ENCODE measurements at regions of chr4 and their contacts with region 1.

Region 1: DNA sequence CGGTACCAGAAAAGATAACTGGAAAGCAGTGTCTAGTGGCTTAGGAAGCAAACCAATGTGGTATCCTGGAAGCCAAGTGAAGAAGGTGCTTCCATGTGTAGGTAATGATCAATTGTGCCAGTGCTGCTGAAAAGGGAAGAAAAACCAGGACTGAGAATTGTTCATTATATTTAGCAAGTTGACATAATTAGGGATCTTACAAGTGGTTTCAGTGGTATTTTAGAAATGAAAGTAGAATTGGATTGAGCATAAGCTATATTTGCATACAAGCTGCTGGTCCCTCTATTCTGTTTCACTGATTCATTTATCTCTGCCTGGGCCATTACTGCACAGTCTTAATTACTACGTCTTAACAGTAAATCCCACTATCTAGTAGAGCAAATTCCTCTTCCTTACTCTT is 32.3 kb downstream of the PRDM8 start:
- DNase-seq: peak; percentile 60
- ATAC-seq: peak; percentile 94
- H3K4me3 ChIP-seq: no peak overlapping the region
- H3K27ac ChIP-seq: peak overlapping the region; percentile 49
- H3K4me1 ChIP-seq: peaks cover 23% of the 10 kb centered on the region
- H3K27me3 ChIP-seq: no peaks in the 10 kb centered on the region
- CTCF ChIP-seq: no peak
- EP300 ChIP-seq: peak; percentile 86 to 89
- POLR2A ChIP-seq: no peak
- RAD21 ChIP-seq: no peak

Region 2: DNA sequence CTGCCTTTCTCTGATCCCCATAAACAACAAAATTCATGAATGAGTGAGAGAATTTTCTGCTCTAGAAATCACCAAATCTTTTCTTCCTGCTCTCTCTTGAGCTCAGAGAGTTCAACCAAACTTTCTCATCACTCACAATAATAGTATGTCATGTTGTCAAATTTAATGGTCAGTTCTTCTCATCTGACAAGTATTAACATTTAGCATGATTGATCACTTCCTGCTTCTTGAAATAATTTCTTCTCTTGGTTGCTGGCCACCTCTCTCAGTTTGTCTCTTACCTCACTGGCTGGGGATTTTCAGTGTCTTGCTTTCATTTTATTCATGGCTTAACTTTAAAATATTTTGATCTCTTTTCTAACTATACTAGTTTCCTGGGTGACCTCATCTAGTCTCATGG is 11.4 kb after region 1 on chr4:
- CTCF ChIA-PET with region 1: interaction called, 6 read pairs
- POLR2A ChIA-PET with region 1: interaction called, 6 read pairs
- RAD21 ChIA-PET with region 1: interaction called, 28 read pairs
- SMC1A ChIA-PET with region 1: interaction called, 51 read pairs
- in situ Hi-C with region 1: no loop called
- intact Hi-C with region 1: no loop called
- DNase-seq: peak; percentile 45
- ATAC-seq: peak; percentile 95
- H3K4me3 ChIP-seq: no peak overlapping the region
- H3K27ac ChIP-seq: no peak overlapping the region
- H3K4me1 ChIP-seq: no peaks in the 10 kb centered on the region
- H3K27me3 ChIP-seq: no peaks in the 10 kb centered on the region
- CTCF ChIP-seq: no peak
- EP300 ChIP-seq: peak in 1 of 2 experiments; percentile 61; a peak in 1 of 4 replicates
- POLR2A ChIP-seq: no peak
- RAD21 ChIP-seq: no peak

Region 3: DNA sequence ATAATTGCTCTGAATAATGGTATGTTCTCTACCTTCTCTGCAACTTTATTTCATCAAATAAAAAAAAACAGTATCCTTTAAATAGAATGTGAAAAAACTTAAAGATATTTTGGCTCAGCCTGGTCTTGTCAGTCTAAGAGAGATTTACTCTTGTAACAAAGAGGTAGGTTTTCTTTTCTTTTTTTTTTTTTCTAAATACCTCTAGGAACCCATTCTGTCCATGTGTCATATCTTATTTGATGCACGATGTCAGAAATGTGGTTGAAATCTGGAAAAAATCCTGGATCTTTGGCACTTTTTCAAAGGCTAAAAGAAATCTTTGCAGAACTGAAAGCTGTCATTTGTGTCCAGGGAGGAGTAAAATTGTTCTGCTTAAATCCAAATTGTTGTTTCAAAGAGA is 19.6 kb after region 1 on chr4:
- CTCF ChIA-PET with region 1: interaction called, 4 read pairs
- POLR2A ChIA-PET with region 1: interaction called, 9 read pairs
- RAD21 ChIA-PET with region 1: interaction called, 3 read pairs
- SMC1A ChIA-PET with region 1: interaction called, 17 read pairs
- in situ Hi-C with region 1: no loop called
- intact Hi-C with region 1: loop called (anchors 2 kb)
- DNase-seq: no peak
- ATAC-seq: no peak
- H3K4me3 ChIP-seq: no peak overlapping the region
- H3K27ac ChIP-seq: no peak overlapping the region
- H3K4me1 ChIP-seq: peaks cover 4% of the 10 kb centered on the region; the same call in 1 of the 2 replicates
- H3K27me3 ChIP-seq: no peaks in the 10 kb centered on the region
- CTCF ChIP-seq: no peak
- EP300 ChIP-seq: no peak
- POLR2A ChIP-seq: no peak
- RAD21 ChIP-seq: no peak

Region 4: GRCh38 chr4:80255329-80256095 is 25.9 kb after region 1 on chr4:
- CTCF ChIA-PET with region 1: interaction called, 4 read pairs
- POLR2A ChIA-PET with region 1: interaction called, 9 read pairs
- RAD21 ChIA-PET with region 1: no interaction called
- SMC1A ChIA-PET with region 1: interaction called, 10 read pairs
- in situ Hi-C with region 1: no loop called
- intact Hi-C with region 1: loop called (anchors 2 kb)
- DNase-seq: no peak
- ATAC-seq: no peak
- H3K4me3 ChIP-seq: no peak overlapping the region
- H3K27ac ChIP-seq: no peak overlapping the region
- H3K4me1 ChIP-seq: peaks cover 4% of the 10 kb centered on the region; the same call in 1 of the 2 replicates
- H3K27me3 ChIP-seq: no peaks in the 10 kb centered on the region
- CTCF ChIP-seq: no peak
- EP300 ChIP-seq: no peak
- POLR2A ChIP-seq: no peak
- RAD21 ChIP-seq: no peak

Region 5: DNA sequence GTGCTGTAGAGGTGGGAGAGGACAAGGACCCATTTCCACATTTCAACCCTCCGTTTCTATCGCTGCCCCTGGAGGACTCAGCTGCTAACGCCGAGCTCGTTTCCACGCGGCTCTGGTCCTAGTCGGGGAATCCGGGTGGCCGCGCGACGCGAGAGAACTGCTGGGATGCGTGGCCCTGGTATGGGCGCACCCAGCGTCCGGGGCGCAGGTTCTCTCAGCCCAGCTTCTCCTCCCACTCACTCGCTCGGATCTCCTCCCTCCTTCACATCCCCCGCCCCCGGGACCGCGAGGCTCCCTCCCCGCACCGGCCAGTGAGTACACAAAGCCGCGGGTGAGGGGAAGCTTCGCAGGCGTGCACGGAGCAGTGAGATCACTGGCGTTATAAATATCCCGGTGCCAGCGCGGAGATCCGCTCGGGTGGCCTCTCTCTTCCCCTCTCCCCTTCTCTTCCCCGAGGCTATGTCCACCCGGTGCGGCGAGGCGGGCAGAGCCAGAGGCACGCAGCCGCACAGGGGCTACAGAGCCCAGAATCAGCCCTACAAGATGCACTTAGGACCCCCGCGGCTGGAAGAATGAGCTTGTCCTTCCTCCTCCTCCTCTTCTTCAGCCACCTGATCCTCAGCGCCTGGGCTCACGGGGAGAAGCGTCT is 36.8 kb after region 1 on chr4 and contains the start of gene FGF5:
- CTCF ChIA-PET with region 1: no interaction called
- POLR2A ChIA-PET with region 1: no interaction called
- RAD21 ChIA-PET with region 1: no interaction called
- SMC1A ChIA-PET with region 1: interaction called, 5 read pairs
- in situ Hi-C with region 1: no loop called
- intact Hi-C with region 1: loop called (anchors 5 kb)
- DNase-seq: no peak
- ATAC-seq: peak; percentile 77
- H3K4me3 ChIP-seq: peak within 1 kb of the TSS; percentile 36; the same call in 1 of the 2 replicates
- H3K27ac ChIP-seq: no peak within 1 kb of the TSS
- H3K4me1 ChIP-seq: no peaks in the 10 kb centered on the region
- H3K27me3 ChIP-seq: peaks cover 11 to 36% of the 10 kb centered on the region in 2 experiments
- CTCF ChIP-seq: no peak
- EP300 ChIP-seq: no peak
- POLR2A ChIP-seq: no peak
- RAD21 ChIP-seq: no peak
- polyA plus RNA-seq, gene FGF5: 1.1 to 1.7 TPM